ENCODE measurements at regions of chr20 and their contacts with region 1.

Region 1: DNA sequence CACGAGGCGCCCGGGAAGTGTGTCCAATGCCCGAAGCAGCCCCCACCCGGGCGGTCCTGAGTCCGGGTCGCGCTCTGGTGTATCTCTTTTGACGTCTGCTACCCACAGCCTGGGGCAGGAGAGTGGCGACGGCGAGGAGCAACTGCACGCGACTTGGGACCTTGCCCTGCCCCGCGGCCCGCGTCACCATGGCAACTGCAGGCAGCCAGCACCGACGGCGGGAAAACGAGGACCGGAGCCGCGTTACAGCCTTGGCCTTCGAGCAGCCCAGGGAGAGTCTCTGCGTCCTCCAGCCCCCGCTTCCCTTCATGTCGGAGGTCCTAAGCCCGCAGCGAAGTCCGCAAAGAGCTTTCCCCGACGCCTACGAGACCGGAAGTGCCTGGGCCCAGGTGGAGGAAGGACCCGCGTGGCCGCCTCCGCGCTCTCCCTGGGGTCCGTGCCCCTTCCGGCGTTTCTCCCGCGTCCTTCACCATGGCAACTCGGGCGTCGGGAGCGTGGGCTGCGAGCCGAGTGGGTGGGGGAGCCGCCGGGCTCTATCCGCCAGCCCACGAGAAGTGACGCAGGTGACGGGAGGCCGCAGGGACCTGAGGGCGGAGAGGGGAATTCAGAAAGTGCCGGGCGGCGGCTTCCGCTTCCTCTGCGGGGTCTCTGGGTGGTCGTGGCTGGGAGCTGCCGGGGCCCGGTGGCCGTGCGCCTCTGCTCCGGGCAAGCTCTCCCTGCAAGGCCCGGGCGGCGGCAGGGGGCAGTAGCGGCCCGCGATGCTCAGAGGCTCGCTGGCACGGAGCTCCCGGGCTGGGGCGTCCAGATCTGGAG is 88.6 kb upstream of the TGM3 start:
- DNase-seq: peak; percentile 25 to 76
- H3K4me3 ChIP-seq: peak overlapping the region; percentile 60
- H3K27ac ChIP-seq: no peak overlapping the region
- H3K4me1 ChIP-seq: peaks cover 0 to 6% of the 10 kb centered on the region in 2 donors
- H3K27me3 ChIP-seq: no peaks in the 10 kb centered on the region
- CTCF ChIP-seq: peak; percentile 42 to 73 (median 64)

Region 2: DNA sequence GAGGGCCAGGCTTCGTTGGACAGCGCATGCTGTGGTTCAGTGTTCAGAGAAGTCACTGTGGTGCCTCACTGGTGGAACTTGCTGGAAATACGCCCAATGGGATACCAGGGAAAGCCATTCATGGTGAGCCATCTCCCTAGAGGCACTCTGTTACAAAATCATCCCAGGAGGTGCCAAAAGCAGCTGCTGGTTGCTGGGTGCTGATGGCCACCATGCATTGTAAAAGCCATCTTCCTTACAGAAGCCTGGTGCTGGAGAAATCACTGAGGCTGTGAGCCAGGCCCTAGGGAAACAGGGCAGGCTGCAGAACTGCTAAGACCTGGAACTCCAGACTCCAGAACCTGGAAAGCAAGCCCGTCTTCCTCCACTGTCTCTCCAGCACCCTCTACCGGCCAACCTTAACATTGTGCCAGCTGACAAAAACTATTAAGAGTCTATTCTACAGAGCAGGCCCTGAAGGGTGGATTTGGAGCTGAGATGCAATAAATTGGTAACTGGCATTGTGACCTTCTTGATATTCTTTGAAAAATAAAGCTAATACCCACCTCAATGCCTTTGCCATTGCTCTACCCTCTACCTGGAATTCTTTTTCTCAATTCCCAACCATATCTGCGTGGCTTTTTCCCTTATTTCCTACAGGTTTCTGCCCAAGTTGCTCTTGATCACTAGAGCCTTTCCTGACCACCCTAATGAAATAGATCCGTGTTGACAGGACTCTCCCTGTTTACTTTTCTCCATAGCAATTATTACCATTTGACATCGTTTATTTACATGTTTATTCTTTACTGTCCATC is 245.0 kb after region 1 on chr20:
- intact Hi-C with region 1: loop called (anchors 2 kb)
- DNase-seq: peak in 1 of 2 donors; percentile 79
- H3K4me3 ChIP-seq: no peak overlapping the region
- H3K27ac ChIP-seq: no peak overlapping the region
- H3K4me1 ChIP-seq: peaks cover 0 to 6% of the 10 kb centered on the region in 2 donors
- H3K27me3 ChIP-seq: no peaks in the 10 kb centered on the region
- CTCF ChIP-seq: peak; percentile 22 to 84 (median 75)